ENCODE measurements at regions of chr14 and their contacts with region 1.

Region 1: GRCh38 chr14:68248481-68249255 is 429.1 kb downstream of the RAD51B start:
- DNase-seq: peak; percentile 60
- H3K4me3 Mint-ChIP-seq: peak overlapping the region; percentile 21
- H3K27ac Mint-ChIP-seq: peak overlapping the region; percentile 80
- H3K4me1 Mint-ChIP-seq: peaks cover 57% of the 10 kb centered on the region
- H3K27me3 Mint-ChIP-seq: no peaks in the 10 kb centered on the region
- CTCF ChIP-seq: peak; percentile 67

Region 2: GRCh38 chr14:67943947-67944346 is 304.7 kb before region 1 on chr14:
- CTCF ChIA-PET with region 1: interaction called, 23 read pairs
- POLR2A ChIA-PET with region 1: interaction called, 8 read pairs
- intact Hi-C with region 1: loop called (anchors 1 kb)
- DNase-seq: peak; percentile 77
- H3K4me3 Mint-ChIP-seq: no peak overlapping the region
- H3K27ac Mint-ChIP-seq: peak overlapping the region; percentile 81
- H3K4me1 Mint-ChIP-seq: peaks cover 39% of the 10 kb centered on the region
- H3K27me3 Mint-ChIP-seq: no peaks in the 10 kb centered on the region
- CTCF ChIP-seq: peak; percentile 81

Region 3: GRCh38 chr14:68137704-68138619 is 110.7 kb before region 1 on chr14:
- CTCF ChIA-PET with region 1: no interaction called
- POLR2A ChIA-PET with region 1: interaction called, 9 read pairs
- intact Hi-C with region 1: loop called (anchors 5 kb)
- DNase-seq: peak; percentile 98
- H3K4me3 Mint-ChIP-seq: peak overlapping the region; percentile 16
- H3K27ac Mint-ChIP-seq: peak overlapping the region; percentile 94
- H3K4me1 Mint-ChIP-seq: peaks cover 50% of the 10 kb centered on the region
- H3K27me3 Mint-ChIP-seq: no peaks in the 10 kb centered on the region
- CTCF ChIP-seq: no peak

Region 4: GRCh38 chr14:68466491-68467032 is 217.9 kb after region 1 on chr14:
- CTCF ChIA-PET with region 1: interaction called, 7 read pairs
- POLR2A ChIA-PET with region 1: interaction called, 4 read pairs
- intact Hi-C with region 1: loop called (anchors 5 kb)
- DNase-seq: peak; percentile 93
- H3K4me3 Mint-ChIP-seq: peak overlapping the region; percentile 60
- H3K27ac Mint-ChIP-seq: peak overlapping the region; percentile 75
- H3K4me1 Mint-ChIP-seq: peaks cover 65% of the 10 kb centered on the region
- H3K27me3 Mint-ChIP-seq: no peaks in the 10 kb centered on the region
- CTCF ChIP-seq: no peak

Region 5: GRCh38 chr14:68695326-68695768 is 446.7 kb after region 1 on chr14:
- CTCF ChIA-PET with region 1: no interaction called
- POLR2A ChIA-PET with region 1: interaction called, 3 read pairs
- intact Hi-C with region 1: loop called (anchors 5 kb)
- DNase-seq: peak; percentile 99
- H3K4me3 Mint-ChIP-seq: peak overlapping the region; percentile 40
- H3K27ac Mint-ChIP-seq: peak overlapping the region; percentile 96
- H3K4me1 Mint-ChIP-seq: peaks cover 44% of the 10 kb centered on the region
- H3K27me3 Mint-ChIP-seq: no peaks in the 10 kb centered on the region
- CTCF ChIP-seq: no peak

Region 6: DNA sequence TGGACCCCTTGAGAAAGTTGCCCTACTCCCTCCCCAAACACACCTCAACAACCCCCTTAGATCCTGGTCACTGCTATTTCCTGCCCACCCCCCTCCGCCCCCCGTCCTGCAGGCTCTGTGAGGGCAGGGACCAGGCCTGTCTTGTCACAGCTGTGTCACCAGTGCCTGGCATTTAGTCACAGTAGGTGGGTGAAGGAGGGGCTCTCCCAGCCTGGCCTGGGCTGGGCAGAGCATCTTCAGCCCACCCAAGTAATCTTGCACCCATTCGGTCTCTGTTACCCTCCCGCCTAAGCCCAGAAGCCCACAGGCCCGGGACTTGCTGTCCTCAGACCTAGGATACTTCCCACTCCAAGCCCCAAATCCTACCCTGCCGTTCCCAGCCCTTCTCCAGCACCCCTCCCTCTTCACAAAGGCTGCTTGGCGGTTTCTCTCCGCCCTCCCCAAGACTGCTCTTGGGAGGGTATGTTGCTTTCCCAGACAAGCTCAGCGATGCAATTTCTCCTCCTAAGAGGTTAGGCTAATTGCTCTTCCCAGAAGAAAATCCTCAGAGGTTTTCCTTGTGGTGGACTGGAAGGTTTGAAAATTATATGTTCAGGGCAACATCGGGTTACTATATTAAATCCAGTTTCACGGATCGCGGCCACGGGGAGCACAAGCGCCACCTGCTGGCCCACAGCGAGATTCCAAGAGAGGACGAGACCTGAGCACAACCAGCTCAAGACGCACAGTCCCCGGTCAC is 595.0 kb after region 1 on chr14:
- CTCF ChIA-PET with region 1: interaction called, 16 read pairs
- POLR2A ChIA-PET with region 1: no interaction called
- intact Hi-C with region 1: no loop called
- DNase-seq: peak; percentile 68
- H3K4me3 Mint-ChIP-seq: no peak overlapping the region
- H3K27ac Mint-ChIP-seq: no peak overlapping the region
- H3K4me1 Mint-ChIP-seq: peaks cover 22% of the 10 kb centered on the region
- H3K27me3 Mint-ChIP-seq: no peaks in the 10 kb centered on the region
- CTCF ChIP-seq: peak; percentile 67